ENCODE measurements at regions of chr20 and their contacts with region 1.

Region 1: DNA sequence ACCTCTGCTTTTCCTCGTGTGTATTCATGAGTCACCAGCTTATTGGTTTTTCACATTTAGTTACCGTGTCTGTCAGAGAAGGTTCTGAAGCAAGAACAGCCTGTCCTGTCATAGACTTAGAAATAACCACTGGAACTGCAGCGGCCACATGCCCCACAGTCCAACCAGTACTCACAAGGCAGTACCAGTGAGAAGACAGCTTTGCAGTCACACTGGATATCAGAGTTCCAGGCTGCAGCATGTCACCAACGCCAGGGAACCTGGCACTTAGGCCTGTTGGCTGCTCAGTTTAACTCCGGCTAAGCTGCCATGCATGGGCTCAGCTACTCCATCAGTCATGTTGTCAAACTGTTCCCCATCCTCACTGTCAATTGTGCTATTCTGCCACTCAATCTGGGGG is 40.1 kb downstream of the ADNP start:
- DNase-seq: no peak
- H3K4me3 ChIP-seq: no peak overlapping the region
- H3K27ac ChIP-seq: no peak overlapping the region
- H3K4me1 ChIP-seq: no peaks in the 10 kb centered on the region
- H3K27me3 ChIP-seq: no peaks in the 10 kb centered on the region
- CTCF ChIP-seq: no peak

Region 2: GRCh38 chr20:50837532-50838506 is 53.3 kb before region 1 on chr20:
- dilution Hi-C with region 1: loop called (anchors 10 kb)
- DNase-seq: peak; percentile 49
- H3K4me3 ChIP-seq: no peak overlapping the region
- H3K27ac ChIP-seq: peak overlapping the region; percentile 62
- H3K4me1 ChIP-seq: peaks cover 30% of the 10 kb centered on the region
- H3K27me3 ChIP-seq: no peaks in the 10 kb centered on the region
- CTCF ChIP-seq: no peak